ENCODE measurements at regions of chr19 and their contacts with region 1.

Region 1: DNA sequence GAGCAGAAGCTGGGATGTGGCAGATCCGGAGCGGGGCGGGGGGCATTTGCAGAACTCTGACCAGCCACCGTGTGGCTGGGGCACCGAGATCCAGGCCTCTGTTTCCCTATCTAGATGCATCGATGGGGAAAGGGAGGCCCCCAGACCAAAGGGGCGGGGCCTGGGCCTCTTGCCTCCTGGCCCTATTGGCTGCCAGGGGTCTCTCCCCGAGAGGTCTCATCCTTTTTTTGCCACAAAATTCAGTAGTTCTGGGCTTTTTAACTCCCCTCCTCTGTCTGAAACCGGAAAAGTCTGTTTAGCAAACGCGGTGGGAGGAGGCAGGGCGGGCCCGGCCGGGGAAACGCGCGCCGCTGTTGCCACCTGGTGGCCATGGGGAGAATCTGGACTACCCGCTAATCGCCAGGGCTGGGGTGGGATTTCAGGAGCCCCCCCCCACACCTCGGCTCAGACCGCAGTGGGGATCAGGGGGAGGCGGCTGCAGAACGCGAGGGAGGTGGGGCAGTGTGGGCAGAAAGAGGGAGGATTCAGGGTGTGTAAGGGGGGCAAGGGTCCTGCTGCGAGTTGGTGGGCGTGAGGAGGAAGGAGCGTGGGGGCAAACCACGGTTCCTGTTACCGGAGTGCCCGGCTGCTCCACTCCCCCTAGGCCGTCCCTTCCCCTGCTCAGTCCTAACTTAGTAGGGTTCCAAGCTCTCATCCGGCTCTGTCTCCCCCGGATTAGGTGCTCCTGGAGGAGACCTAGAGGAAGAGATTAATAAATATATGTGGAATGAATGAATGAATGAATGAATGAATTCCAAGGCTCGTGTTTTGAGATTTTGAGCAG is 28.3 kb downstream of the IL12RB1 start:
- DNase-seq: peak; percentile 86
- ATAC-seq: peak; percentile 86
- H3K4me3 Mint-ChIP-seq: peak overlapping the region; percentile 61
- H3K27ac Mint-ChIP-seq: peak overlapping the region; percentile 63; the same call in 1 of the 2 replicates
- H3K4me1 Mint-ChIP-seq: peaks cover 7% of the 10 kb centered on the region
- H3K27me3 Mint-ChIP-seq: no peaks in the 10 kb centered on the region; the same call in 1 of the 2 replicates
- CTCF ChIP-seq: peak; percentile 92

Region 2: GRCh38 chr19:18007044-18007916 is 51.1 kb before region 1 on chr19:
- CTCF ChIA-PET with region 1: interaction called, 46 read pairs
- POLR2A ChIA-PET with region 1: no interaction called
- DNase-seq: peak; percentile 88
- ATAC-seq: peak; percentile 76
- H3K4me3 Mint-ChIP-seq: peak overlapping the region; percentile 90
- H3K27ac Mint-ChIP-seq: peak overlapping the region; percentile 88; the same call in 1 of the 2 replicates
- H3K4me1 Mint-ChIP-seq: peaks cover 6% of the 10 kb centered on the region; the same call in 1 of the 2 replicates
- H3K27me3 Mint-ChIP-seq: peaks cover 23% of the 10 kb centered on the region
- CTCF ChIP-seq: peak; percentile 96

Region 3: GRCh38 chr19:18021121-18021755 is 37.2 kb before region 1 on chr19:
- CTCF ChIA-PET with region 1: no interaction called
- POLR2A ChIA-PET with region 1: no interaction called
- DNase-seq: no peak
- ATAC-seq: no peak
- H3K4me3 Mint-ChIP-seq: no peak overlapping the region
- H3K27ac Mint-ChIP-seq: no peak overlapping the region
- H3K4me1 Mint-ChIP-seq: peaks cover 13% of the 10 kb centered on the region
- H3K27me3 Mint-ChIP-seq: no peaks in the 10 kb centered on the region; the same call in 1 of the 2 replicates
- CTCF ChIP-seq: no peak

Region 4: DNA sequence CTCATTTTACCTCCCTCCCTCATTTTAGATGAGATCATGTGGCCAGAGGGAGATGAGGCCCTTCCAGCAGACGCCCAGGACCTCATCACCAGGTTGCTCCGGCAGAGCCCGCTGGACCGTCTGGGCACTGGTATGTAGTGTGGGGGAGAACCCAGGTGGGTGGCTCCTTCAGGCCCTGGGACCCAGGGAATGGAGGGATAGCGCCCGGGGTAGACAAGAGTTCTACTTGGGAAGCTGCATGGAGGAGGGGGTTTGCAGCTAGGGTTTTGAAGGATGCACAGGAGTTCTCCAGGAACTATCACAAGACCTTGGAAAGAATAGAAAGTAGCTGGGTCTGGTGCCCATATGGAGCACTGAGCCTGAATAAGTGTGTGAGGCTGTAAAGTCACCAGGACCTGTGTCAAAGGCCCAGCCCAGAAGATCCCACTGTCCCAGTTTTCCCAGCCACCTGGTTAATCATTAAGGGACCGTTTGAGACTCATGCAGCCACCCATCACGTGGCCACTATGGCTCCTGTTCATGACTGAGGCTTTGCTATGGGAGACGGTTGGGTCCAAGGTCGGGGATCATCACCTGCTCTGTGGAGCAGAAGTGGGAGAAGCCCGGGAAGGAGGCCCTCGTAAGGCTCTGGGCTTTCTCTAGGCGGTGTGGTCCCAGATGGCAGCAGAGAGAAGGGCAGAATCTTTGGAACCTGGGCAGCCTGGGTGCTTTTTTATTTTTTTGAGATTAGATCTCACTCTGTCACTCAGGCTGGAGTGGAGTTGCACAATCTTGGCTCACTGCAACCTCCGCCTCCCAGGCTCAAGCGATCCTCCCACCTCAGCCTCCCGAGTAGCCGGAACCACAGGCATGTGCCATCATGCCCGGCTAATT is 77.5 kb after region 1 on chr19:
- CTCF ChIA-PET with region 1: no interaction called
- POLR2A ChIA-PET with region 1: no interaction called
- DNase-seq: no peak
- ATAC-seq: no peak
- H3K4me3 Mint-ChIP-seq: no peak overlapping the region
- H3K27ac Mint-ChIP-seq: no peak overlapping the region
- H3K4me1 Mint-ChIP-seq: no peaks in the 10 kb centered on the region
- H3K27me3 Mint-ChIP-seq: no peaks in the 10 kb centered on the region
- CTCF ChIP-seq: no peak

Measured in WTC11 (cell line).